Naive thymus-derived CD4-positive, alpha-beta T cell (primary cell): ENCODE measurements at regions of chr2 and their contacts with region 1.

Region 1: DNA sequence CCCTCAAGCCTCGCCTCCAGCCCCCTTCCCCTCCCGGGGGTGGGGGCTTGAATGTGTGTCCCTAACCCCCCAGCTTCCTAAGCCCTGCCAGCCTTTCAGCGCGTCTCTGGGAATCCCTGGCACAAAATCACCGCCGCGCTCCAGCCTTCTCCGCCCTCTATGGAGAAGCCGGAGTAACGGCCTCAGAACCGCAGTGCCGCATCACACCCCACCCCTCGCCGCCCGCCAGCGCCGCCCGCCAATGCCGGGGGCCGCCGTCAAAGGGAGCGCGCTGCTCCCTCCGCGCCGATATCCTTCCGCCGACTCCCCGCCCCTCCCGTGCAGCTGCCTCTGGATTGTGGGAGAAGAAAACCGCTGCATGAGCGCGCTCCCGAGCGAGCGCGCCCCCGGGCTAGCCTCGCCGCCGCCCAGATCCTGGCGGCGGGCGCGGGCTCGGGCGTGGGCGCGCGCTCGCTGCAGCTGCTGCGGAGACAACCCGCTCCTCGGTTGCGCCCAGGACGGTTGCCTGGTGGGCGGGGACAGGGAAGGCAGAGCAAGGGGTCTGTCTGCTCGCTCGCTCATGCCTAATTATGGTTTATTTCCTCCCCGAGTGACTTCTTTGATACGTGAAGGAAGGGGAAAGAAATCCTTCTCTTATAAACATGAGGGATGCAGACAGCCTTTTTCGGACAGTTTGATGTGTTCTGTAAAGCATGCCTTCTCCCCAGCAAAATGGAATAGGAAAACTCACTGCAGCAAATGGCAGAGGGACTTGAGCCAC is at the start of gene CCDC88A:
- DNase-seq: peak; percentile 78 to 91 (median 85)
- ATAC-seq: peak; percentile 92
- H3K4me3 ChIP-seq: peak within 1 kb of the TSS; percentile 91
- H3K4me3 Mint-ChIP-seq: peak within 1 kb of the TSS; percentile 86 to 98 (median 94)
- H3K27ac ChIP-seq: peak within 1 kb of the TSS; percentile 69
- H3K27ac Mint-ChIP-seq: peak within 1 kb of the TSS; percentile 50 to 97 (median 85)
- H3K4me1 ChIP-seq: peaks cover 0 to 6% of the 10 kb centered on the region in 2 donors
- H3K4me1 Mint-ChIP-seq: peaks cover 5 to 49% (median 41%) of the 10 kb centered on the region in 7 donors
- H3K27me3 ChIP-seq: no peaks in the 10 kb centered on the region
- H3K27me3 Mint-ChIP-seq: peaks cover 0 to 40% (median 0%) of the 10 kb centered on the region in 5 donors
- total RNA-seq, gene CCDC88A: 9.9 to 53.3 (median 15.9) TPM

Region 2: GRCh38 chr2:53767405-53768241 is 1652.2 kb before region 1 on chr2 and contains the start of gene CHAC2:
- CTCF ChIA-PET with region 1: no interaction called
- POLR2A ChIA-PET with region 1: no interaction called
- intact Hi-C with region 1: loop called in 1 of 2 experiments (anchors 5 kb)
- DNase-seq: peak; percentile 74 to 86 (median 84)
- ATAC-seq: peak; percentile 93
- H3K4me3 ChIP-seq: peak within 1 kb of the TSS; percentile 80
- H3K4me3 Mint-ChIP-seq: peak within 1 kb of the TSS; percentile 88 to 98 (median 92)
- H3K27ac ChIP-seq: peak within 1 kb of the TSS; percentile 86
- H3K27ac Mint-ChIP-seq: peak within 1 kb of the TSS; percentile 60 to 99 (median 90)
- H3K4me1 ChIP-seq: peaks cover 0 to 8% of the 10 kb centered on the region in 2 donors
- H3K4me1 Mint-ChIP-seq: peaks cover 7 to 41% (median 33%) of the 10 kb centered on the region in 7 donors
- H3K27me3 ChIP-seq: no peaks in the 10 kb centered on the region
- H3K27me3 Mint-ChIP-seq: no peaks in the 10 kb centered on the region
- total RNA-seq, gene CHAC2: 0.29 to 12.1 (median 1.2) TPM

Region 3: GRCh38 chr2:54115284-54116137 is 1304.3 kb before region 1 on chr2 and contains the start of gene ACYP2:
- CTCF ChIA-PET with region 1: no interaction called
- POLR2A ChIA-PET with region 1: no interaction called
- intact Hi-C with region 1: loop called in 1 of 2 experiments (anchors 2 kb)
- DNase-seq: peak; percentile 76 to 93 (median 89)
- ATAC-seq: peak; percentile 88
- H3K4me3 ChIP-seq: peak within 1 kb of the TSS; percentile 89
- H3K4me3 Mint-ChIP-seq: peak within 1 kb of the TSS; percentile 92 to 98 (median 97)
- H3K27ac ChIP-seq: peak within 1 kb of the TSS; percentile 93
- H3K27ac Mint-ChIP-seq: peak within 1 kb of the TSS; percentile 98 to 100 (median 99)
- H3K4me1 ChIP-seq: peaks cover 0 to 6% of the 10 kb centered on the region in 2 donors
- H3K4me1 Mint-ChIP-seq: peaks cover 10 to 31% (median 24%) of the 10 kb centered on the region in 7 donors
- H3K27me3 ChIP-seq: no peaks in the 10 kb centered on the region
- H3K27me3 Mint-ChIP-seq: peaks cover 0 to 5% (median 0%) of the 10 kb centered on the region in 5 donors
- total RNA-seq, gene ACYP2: 12.3 to 19.6 (median 15.6) TPM

Region 4: DNA sequence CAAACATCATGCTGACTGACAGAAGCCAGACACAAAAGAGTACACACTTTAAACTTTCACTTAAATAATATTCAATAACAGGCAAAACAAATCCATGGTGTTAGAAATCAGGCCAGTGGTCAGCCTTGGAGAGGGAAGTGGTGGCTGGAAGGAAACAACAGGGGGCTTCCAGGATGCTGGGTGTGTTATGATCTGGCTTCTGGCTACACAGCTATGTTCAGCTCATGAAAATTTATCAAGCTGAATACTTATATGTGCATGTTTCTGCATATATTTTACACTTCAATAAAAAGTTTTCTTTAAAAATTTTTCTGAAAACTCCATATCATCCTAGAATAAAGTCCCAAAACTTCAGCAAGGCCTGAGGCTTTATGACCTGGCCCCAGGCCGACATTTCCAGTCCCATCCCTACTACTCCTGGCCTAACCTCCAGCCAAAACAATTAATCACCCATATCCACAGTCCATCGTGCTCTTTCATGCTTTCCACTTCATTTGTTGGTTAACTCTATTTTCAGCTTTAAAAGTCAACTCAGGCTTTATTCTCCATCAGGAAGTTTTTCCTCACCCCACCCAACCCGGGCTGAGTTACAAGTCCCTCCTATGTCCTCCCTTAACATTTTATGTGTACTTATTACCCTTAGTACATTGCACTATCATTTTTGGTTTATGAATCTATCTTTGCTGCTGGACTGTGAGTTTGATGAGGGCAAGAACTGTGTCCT is 991.6 kb before region 1 on chr2:
- CTCF ChIA-PET with region 1: no interaction called
- POLR2A ChIA-PET with region 1: no interaction called
- intact Hi-C with region 1: no loop called
- DNase-seq: no peak
- ATAC-seq: no peak
- H3K4me3 ChIP-seq: no peak overlapping the region
- H3K4me3 Mint-ChIP-seq: no peak overlapping the region
- H3K27ac ChIP-seq: no peak overlapping the region
- H3K27ac Mint-ChIP-seq: no peak overlapping the region
- H3K4me1 ChIP-seq: no peaks in the 10 kb centered on the region
- H3K4me1 Mint-ChIP-seq: peaks cover 4 to 8% (median 7%) of the 10 kb centered on the region in 7 donors
- H3K27me3 ChIP-seq: no peaks in the 10 kb centered on the region
- H3K27me3 Mint-ChIP-seq: no peaks in the 10 kb centered on the region

Region 5: DNA sequence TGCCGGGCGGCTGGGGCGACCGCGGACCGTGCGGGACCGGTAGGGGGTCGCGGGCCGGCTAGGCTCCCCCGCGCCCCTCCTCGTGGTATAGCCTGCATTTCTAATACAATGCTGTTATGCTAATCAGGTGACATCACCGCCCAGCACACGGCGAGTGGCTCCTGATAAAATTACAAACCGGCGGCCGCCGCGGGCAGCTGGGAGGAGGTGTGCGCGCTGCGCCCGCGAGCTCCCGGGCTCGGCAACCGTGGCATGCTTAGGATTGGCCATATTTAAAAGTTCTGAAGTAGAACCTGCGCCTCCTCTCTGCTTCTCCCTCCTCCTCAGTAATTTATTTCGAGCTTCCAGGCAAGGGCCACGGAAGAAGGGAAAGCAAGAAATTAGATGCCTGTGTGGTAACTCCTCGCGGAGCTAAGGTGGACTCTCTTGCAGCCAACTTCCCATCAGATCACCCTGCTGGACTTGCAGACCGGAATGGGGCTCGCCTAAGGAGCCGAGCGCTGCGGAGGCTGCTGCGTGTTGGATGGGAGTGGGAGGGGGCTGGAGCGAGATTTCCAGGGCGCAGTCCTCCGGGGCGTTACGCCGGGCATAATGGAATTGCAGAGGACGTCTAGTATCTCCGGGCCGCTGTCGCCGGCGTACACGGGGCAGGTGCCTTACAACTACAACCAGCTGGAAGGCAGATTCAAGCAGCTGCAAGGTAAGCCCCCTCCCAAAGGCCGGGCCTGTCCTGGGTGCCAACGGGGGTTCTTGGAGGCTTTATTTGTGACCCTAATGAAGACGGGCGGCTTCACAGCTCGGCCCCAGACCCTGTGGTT is 861.5 kb before region 1 on chr2:
- CTCF ChIA-PET with region 1: no interaction called
- POLR2A ChIA-PET with region 1: no interaction called
- intact Hi-C with region 1: loop called in 1 of 2 experiments (anchors 5 kb)
- DNase-seq: peak; percentile 48 to 75 (median 64)
- ATAC-seq: peak; percentile 82
- H3K4me3 ChIP-seq: peak overlapping the region; percentile 94
- H3K4me3 Mint-ChIP-seq: peak overlapping the region; percentile 86 to 100 (median 98)
- H3K27ac ChIP-seq: peak overlapping the region; percentile 86
- H3K27ac Mint-ChIP-seq: peak overlapping the region; percentile 90 to 98 (median 96)
- H3K4me1 ChIP-seq: peaks cover 10 to 11% of the 10 kb centered on the region in 2 donors
- H3K4me1 Mint-ChIP-seq: peaks cover 29 to 65% (median 59%) of the 10 kb centered on the region in 7 donors
- H3K27me3 ChIP-seq: no peaks in the 10 kb centered on the region
- H3K27me3 Mint-ChIP-seq: no peaks in the 10 kb centered on the region

Region 6: DNA sequence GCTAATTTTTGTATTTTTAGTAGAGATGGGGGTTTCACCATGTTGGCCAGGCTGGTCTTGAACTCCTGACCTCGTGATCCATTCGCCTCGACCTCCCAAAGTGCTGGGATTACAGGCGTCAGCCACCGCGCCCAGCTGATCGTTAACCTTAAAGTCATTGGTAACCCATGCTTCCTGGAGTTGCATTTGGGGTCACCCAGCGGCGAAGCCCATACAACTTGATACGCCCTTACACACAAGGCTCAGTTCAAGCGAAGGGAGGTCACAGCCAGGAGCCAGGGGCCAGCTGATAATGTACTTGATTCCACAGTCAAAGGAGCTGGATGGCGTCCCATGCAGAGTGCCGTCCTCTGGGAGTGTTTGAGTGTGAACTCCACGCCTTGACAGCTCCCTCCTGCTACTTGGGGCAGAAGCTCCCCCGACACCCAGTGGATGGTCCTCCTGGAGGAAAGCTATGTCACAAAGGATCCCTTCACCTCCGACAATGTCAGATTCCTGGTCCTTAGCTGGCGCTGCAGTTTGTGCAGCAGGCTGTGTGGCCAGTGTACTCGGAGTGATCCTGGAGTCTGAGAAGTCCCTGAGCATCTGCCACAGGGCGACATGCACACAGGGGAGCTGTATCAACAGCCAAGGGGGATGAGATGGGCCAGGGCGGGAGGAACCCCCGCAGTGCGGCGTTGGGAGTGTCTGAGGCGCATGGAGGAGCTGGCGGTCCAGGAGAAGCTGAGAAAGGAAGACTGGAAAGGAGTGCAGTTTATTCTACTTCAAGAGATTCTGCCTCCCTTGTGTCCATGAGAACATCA is 195.7 kb before region 1 on chr2:
- CTCF ChIA-PET with region 1: interaction called, 3 read pairs
- POLR2A ChIA-PET with region 1: interaction called, 3 read pairs
- intact Hi-C with region 1: loop called in 1 of 2 experiments (anchors 2 kb)
- DNase-seq: peak in 1 of 9 donors; percentile 13
- ATAC-seq: no peak
- H3K4me3 ChIP-seq: no peak overlapping the region
- H3K4me3 Mint-ChIP-seq: peak overlapping the region; percentile 71 to 89 (median 82)
- H3K27ac ChIP-seq: peak overlapping the region; percentile 92
- H3K27ac Mint-ChIP-seq: peak overlapping the region; percentile 72 to 94 (median 89)
- H3K4me1 ChIP-seq: peaks cover 14 to 18% of the 10 kb centered on the region in 2 donors
- H3K4me1 Mint-ChIP-seq: peaks cover 30 to 62% (median 48%) of the 10 kb centered on the region in 7 donors
- H3K27me3 ChIP-seq: no peaks in the 10 kb centered on the region
- H3K27me3 Mint-ChIP-seq: no peaks in the 10 kb centered on the region

Region 7: GRCh38 chr2:55282110-55282917 is 137.5 kb before region 1 on chr2:
- CTCF ChIA-PET with region 1: no interaction called
- POLR2A ChIA-PET with region 1: interaction called, 4 read pairs
- intact Hi-C with region 1: loop called (anchors 1 to 5 kb)
- DNase-seq: peak; percentile 78 to 87 (median 83)
- ATAC-seq: peak; percentile 99
- H3K4me3 ChIP-seq: peak overlapping the region; percentile 80
- H3K4me3 Mint-ChIP-seq: peak overlapping the region; percentile 87 to 97 (median 92)
- H3K27ac ChIP-seq: peak overlapping the region; percentile 93
- H3K27ac Mint-ChIP-seq: peak overlapping the region; percentile 94 to 99 (median 98)
- H3K4me1 ChIP-seq: peaks cover 0 to 4% of the 10 kb centered on the region in 2 donors
- H3K4me1 Mint-ChIP-seq: peaks cover 11 to 43% (median 29%) of the 10 kb centered on the region in 7 donors
- H3K27me3 ChIP-seq: no peaks in the 10 kb centered on the region
- H3K27me3 Mint-ChIP-seq: peaks cover 0 to 2% (median 0%) of the 10 kb centered on the region in 5 donors

Region 8: GRCh38 chr2:55519938-55520885 is 100.4 kb after region 1 on chr2:
- CTCF ChIA-PET with region 1: no interaction called
- POLR2A ChIA-PET with region 1: interaction called, 5 read pairs
- intact Hi-C with region 1: loop called (anchors 1 kb)
- DNase-seq: peak in 4 of 9 donors; percentile 23 to 58 (median 26)
- ATAC-seq: peak; percentile 31
- H3K4me3 ChIP-seq: peak overlapping the region; percentile 80
- H3K4me3 Mint-ChIP-seq: peak overlapping the region; percentile 89 to 99 (median 98)
- H3K27ac ChIP-seq: peak overlapping the region; percentile 90
- H3K27ac Mint-ChIP-seq: peak overlapping the region; percentile 96 to 100 (median 100)
- H3K4me1 ChIP-seq: peaks cover 0 to 5% of the 10 kb centered on the region in 2 donors
- H3K4me1 Mint-ChIP-seq: peaks cover 5 to 28% (median 16%) of the 10 kb centered on the region in 7 donors
- H3K27me3 ChIP-seq: no peaks in the 10 kb centered on the region
- H3K27me3 Mint-ChIP-seq: no peaks in the 10 kb centered on the region

Region 9: DNA sequence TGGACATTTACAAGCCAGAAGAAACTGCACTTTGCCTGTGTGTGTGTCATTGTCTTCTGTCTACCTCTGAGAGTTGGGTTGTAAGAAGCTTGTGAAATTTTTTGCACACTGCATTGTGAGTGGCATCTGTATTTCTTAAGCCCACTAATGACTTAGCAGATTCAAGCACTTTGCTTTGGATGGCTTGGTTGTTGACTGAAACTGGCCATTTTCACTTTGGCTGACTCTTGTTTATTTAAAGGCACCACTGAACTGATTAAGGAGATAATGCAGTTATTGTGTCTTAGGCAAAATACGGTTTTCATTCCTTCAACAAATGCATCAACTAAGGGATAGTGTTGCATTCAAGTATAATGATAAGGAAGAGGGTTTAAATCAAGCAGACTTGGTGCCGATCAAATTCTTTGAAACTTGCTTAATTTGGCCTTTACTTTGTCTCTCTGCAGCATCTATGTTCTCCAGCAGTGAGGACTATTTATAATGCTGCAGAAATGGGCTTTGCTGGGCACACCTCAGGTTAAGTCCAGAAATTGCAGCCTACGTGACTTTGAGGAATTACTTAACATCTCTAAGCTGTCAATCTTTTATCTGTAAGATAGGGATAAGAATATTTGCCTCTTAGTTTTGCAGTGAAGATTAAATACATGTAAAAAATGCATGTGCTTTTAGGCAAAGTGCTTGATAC is 905.9 kb after region 1 on chr2:
- CTCF ChIA-PET with region 1: no interaction called
- POLR2A ChIA-PET with region 1: no interaction called
- intact Hi-C with region 1: no loop called
- DNase-seq: no peak
- ATAC-seq: no peak
- H3K4me3 ChIP-seq: no peak overlapping the region
- H3K4me3 Mint-ChIP-seq: no peak overlapping the region
- H3K27ac ChIP-seq: no peak overlapping the region
- H3K27ac Mint-ChIP-seq: no peak overlapping the region
- H3K4me1 ChIP-seq: no peaks in the 10 kb centered on the region
- H3K4me1 Mint-ChIP-seq: peaks cover 0 to 2% (median 0%) of the 10 kb centered on the region in 7 donors
- H3K27me3 ChIP-seq: no peaks in the 10 kb centered on the region
- H3K27me3 Mint-ChIP-seq: peaks cover 0 to 1% (median 0%) of the 10 kb centered on the region in 5 donors